ENCODE measurements at regions of chr3 and their contacts with region 1.

Region 1: DNA sequence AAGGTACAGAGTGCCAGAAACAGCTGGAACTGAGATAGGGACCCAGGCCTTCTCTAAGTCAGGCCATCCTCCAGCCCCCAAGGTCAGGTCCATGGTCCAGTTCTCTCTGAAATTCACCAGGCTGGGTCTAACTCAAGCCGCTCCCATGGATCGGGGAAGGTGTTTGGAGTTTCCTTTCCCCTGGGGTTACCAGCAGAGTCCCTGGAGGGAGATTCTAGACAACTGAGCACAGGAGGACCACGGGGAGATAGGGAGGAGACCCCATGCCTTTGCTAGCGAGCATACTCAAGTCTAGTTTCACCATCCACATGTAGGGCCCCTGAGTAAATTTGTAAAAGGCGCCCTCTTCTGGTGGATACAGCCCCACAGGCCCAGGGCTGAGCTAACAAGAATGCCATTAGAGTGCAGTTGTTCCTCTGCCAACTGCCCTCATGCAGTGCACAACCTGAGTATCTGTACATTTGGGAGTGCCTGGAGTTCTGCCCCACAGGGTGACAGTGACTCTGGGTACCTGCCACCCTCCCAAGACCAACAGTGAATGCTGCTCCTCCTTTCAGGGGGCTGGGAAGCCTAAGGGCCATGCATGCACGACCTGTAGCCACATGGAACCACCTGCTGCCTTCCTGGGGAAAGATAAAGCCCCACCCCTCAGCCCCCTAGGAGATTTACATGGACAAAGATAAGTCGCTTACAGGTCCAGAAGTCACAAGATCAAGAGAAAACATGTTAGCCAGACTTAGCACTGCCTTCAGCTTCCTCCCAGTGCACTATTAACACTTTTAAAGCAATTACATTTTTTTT is 89.0 kb downstream of the IQSEC1 start:
- DNase-seq: peak in 1 of 2 donors; percentile 82
- ATAC-seq: peak; percentile 83
- H3K4me3 ChIP-seq: no peak overlapping the region
- H3K27ac ChIP-seq: no peak overlapping the region
- H3K4me1 ChIP-seq: no peaks in the 10 kb centered on the region
- H3K27me3 ChIP-seq: no peaks in the 10 kb centered on the region

Region 2: GRCh38 chr3:12868039-12869034 is 115.9 kb before region 1 on chr3:
- intact Hi-C with region 1: loop called in 1 of 2 experiments (anchors 5 kb)
- DNase-seq: peak; percentile 85 to 92
- ATAC-seq: peak; percentile 93
- H3K4me3 ChIP-seq: no peak overlapping the region
- H3K27ac ChIP-seq: no peak overlapping the region
- H3K4me1 ChIP-seq: no peaks in the 10 kb centered on the region
- H3K27me3 ChIP-seq: no peaks in the 10 kb centered on the region

Region 3: GRCh38 chr3:12891985-12892839 is 92.0 kb before region 1 on chr3:
- intact Hi-C with region 1: loop called in 1 of 2 experiments (anchors 5 kb)
- DNase-seq: no peak
- ATAC-seq: peak; percentile 67
- H3K4me3 ChIP-seq: no peak overlapping the region
- H3K27ac ChIP-seq: peak overlapping the region in 1 of 2 donors; percentile 7
- H3K4me1 ChIP-seq: no peaks in the 10 kb centered on the region
- H3K27me3 ChIP-seq: no peaks in the 10 kb centered on the region

Region 4: GRCh38 chr3:12901623-12902045 is 82.6 kb before region 1 on chr3:
- intact Hi-C with region 1: loop called (anchors 5 kb)
- DNase-seq: no peak
- ATAC-seq: no peak
- H3K4me3 ChIP-seq: no peak overlapping the region
- H3K27ac ChIP-seq: no peak overlapping the region
- H3K4me1 ChIP-seq: no peaks in the 10 kb centered on the region
- H3K27me3 ChIP-seq: no peaks in the 10 kb centered on the region

Region 5: GRCh38 chr3:12918231-12918630 is 66.0 kb before region 1 on chr3:
- intact Hi-C with region 1: loop called in 1 of 2 experiments (anchors 2 kb)
- DNase-seq: no peak
- ATAC-seq: no peak
- H3K4me3 ChIP-seq: no peak overlapping the region
- H3K27ac ChIP-seq: no peak overlapping the region
- H3K4me1 ChIP-seq: no peaks in the 10 kb centered on the region
- H3K27me3 ChIP-seq: no peaks in the 10 kb centered on the region

Region 6: DNA sequence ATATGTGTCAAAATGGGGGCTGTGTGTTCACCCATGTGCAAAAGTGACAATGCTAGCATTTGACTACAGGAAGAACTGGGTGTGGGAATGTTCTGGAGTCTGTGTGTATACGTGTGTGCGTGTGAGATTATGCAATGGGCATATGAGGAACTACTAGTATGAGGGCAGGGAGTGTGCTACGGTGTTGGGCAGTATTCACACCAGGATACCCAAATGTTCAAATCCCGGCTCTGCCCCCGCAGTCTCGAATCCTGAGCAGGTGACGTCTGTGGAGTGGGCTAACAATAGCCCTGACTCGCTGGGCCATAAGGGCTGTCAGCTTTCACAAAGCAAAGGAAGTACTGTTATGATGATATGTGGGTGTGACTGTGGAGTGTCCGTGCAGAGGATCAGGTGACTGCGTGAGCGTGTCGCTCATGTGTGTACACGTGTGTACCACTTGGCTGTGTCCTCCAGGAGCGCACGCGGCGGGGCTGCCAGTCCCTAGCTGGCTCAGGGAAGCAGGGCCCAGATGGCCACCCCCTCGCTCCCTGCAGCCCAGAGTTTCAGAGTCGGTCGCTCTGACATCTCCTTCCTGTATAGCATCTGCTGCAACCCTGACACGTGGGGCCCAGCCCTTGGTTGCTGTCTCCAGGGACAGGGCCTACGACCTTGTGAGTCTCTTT is 61.8 kb after region 1 on chr3:
- intact Hi-C with region 1: no loop called
- DNase-seq: peak in 1 of 2 donors; percentile 55
- ATAC-seq: no peak
- H3K4me3 ChIP-seq: no peak overlapping the region
- H3K27ac ChIP-seq: no peak overlapping the region
- H3K4me1 ChIP-seq: no peaks in the 10 kb centered on the region
- H3K27me3 ChIP-seq: no peaks in the 10 kb centered on the region

Measured in aorta (tissue), 5 donors.